ENCODE measurements at regions of chr5 and their contacts with region 1.

Region 1: DNA sequence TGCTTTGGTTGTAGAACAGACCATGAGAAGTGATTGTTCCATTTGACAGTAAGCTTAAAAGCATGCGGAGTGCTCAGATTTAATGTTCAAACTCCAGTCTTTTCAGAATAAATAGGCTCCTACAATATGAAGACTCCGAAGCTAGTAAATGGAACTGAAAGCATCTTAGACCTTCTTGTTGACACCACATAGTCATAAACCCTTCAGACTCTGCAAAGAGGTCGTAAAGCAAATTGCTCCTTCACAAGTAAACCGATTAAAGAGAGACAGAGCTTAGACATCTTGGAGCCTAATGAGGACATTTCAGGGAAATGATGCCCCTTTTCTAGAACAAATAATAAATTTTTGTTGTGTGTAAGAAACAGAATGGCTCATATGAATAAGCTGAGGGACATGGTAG is 511.0 kb upstream of the RIOK2 start:
- DNase-seq: no peak
- H3K4me3 ChIP-seq: no peak overlapping the region
- H3K27ac ChIP-seq: no peak overlapping the region
- H3K4me1 ChIP-seq: no peaks in the 10 kb centered on the region
- H3K27me3 ChIP-seq: no peaks in the 10 kb centered on the region
- CTCF ChIP-seq: no peak

Region 2: GRCh38 chr5:97434021-97434420 is 260.1 kb before region 1 on chr5:
- intact Hi-C with region 1: loop called (anchors 10 kb)
- DNase-seq: no peak
- H3K4me3 ChIP-seq: no peak overlapping the region
- H3K27ac ChIP-seq: no peak overlapping the region
- H3K4me1 ChIP-seq: no peaks in the 10 kb centered on the region
- H3K27me3 ChIP-seq: no peaks in the 10 kb centered on the region
- CTCF ChIP-seq: no peak